Activated CD4-positive, alpha-beta memory T cell treated with anti-CD3 and anti-CD28 coated beads for 36 hours (primary cell): ENCODE measurements at regions of chr2 and their contacts with region 1.

Region 1: DNA sequence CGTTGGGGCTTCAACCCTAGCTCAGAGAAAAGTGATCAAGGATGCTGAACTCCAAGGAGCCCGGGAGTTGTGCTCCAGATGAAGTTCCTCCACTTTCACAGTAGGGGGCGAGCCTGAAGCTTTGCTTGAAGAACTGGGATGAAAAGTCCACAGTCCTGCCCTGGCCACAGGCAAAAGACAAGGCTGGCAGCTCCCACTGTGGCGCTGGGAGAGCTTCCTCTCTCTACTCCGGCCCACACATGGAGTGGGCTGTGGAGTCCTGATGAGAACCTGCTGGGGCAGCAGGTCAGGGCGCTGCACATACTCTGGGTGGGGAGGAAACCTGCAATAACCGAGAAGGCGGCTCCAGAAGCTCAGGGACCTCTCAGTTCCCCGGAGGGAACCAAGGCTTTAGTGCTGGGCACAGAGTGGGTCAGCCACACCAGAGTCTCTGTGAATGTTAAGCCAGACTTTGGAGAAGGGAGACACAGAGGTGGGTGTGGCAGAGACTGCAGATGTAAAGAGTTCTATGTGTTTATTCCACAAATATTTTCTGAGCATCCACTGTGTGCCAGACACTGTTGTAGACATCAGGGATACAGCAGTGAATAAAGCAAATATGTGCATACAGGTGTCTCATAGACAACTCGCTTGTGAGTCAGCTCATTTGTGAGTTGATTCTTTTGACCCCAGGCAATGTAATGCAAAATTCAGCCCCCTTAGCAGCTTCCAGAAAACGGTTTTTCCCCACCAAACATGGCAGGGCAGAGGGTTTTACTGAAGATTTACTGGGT is 48.0 kb upstream of the MRPL33 start:
- DNase-seq: peak; percentile 44
- H3K4me3 Mint-ChIP-seq: no peak overlapping the region
- H3K27ac Mint-ChIP-seq: no peak overlapping the region
- H3K4me1 Mint-ChIP-seq: peaks cover 29% of the 10 kb centered on the region
- H3K27me3 Mint-ChIP-seq: peaks cover 2% of the 10 kb centered on the region

Region 2: DNA sequence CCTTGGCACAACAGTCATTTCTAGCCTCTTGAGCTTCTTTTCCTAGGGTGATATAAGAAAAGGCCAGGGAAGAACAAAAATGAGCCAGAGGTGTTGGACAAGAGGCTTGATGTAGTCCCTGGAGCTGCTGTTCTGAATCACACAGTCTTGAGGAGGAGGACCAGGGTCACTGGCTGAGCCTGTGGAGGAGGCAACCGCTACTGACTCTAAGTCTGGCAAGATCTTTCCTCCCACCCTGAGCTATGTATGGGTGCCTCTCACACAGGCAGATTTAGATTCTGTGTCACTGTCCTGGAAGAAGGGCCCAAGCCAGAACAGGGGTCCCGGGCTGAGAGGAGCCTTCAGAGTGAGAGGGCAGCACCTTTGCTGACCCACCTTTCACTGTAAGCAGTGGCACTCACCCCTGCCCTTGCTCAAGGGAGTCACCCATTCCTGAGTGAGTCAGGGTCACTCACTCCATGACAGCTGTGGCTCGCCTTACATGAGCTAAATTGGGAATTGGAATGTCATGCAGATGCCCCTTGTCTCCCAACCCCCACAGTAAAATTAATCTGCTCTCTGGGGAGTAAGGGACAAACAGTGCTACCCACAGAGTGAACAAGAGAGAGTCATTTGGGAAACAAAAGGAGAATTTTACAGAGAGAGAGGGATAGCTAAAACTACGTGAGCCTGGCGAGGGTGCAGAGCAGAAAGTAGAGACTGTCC is 441.6 kb before region 1 on chr2 and contains the start of gene TRIM54:
- CTCF ChIA-PET with region 1: no interaction called
- POLR2A ChIA-PET with region 1: no interaction called
- intact Hi-C with region 1: no loop called
- DNase-seq: no peak
- H3K4me3 Mint-ChIP-seq: no peak within 1 kb of the TSS
- H3K27ac Mint-ChIP-seq: no peak within 1 kb of the TSS
- H3K4me1 Mint-ChIP-seq: peaks cover 2% of the 10 kb centered on the region
- H3K27me3 Mint-ChIP-seq: peaks cover 20% of the 10 kb centered on the region
- total RNA-seq, gene TRIM54: not detected

Region 3: DNA sequence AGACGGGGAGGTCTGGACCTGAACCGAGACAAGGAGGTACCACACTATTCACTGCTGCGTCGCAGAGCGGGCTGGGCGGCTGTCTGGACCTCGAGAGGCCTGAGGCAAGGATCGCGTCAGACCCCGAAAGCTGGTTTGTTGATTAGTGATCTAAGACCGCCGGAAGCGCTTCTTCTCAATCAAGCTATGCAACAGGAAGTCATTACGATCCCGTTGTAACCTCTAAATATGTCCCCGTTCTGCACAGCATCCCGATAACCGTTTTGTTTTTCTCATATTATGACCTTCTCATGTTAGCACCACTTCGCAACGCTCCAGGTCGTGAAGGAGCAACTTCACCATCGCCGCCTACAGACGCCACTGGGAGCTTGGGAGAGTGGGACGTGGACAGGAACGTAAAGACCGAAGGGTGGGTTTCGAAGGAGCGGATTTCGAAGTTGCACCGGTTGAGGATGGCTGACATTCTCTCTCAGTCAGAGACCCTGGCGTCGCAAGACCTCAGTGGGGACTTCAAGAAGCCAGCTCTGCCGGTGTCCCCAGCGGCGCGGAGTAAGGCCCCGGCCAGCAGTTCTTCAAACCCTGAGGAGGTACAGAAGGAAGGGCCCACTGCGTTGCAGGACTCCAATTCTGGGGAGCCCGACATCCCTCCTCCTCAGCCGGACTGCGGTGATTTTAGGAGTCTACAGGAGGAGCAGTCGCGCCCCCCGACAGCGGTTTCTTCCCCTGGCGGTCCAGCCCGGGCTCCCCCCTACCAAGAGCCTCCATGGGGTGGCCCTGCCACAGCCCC is 59.9 kb before region 1 on chr2 and contains the starts of genes SLC4A1AP and SUPT7L:
- CTCF ChIA-PET with region 1: no interaction called
- POLR2A ChIA-PET with region 1: no interaction called
- intact Hi-C with region 1: no loop called
- DNase-seq: peak; percentile 81
- H3K4me3 Mint-ChIP-seq: peak within 1 kb of the TSS; percentile 99
- H3K27ac Mint-ChIP-seq: peak within 1 kb of the TSS; percentile 100
- H3K4me1 Mint-ChIP-seq: peaks cover 50% of the 10 kb centered on the region
- H3K27me3 Mint-ChIP-seq: no peaks in the 10 kb centered on the region
- total RNA-seq, gene SLC4A1AP: 26.5 TPM
- total RNA-seq, gene SUPT7L: 30.1 to 30.3 TPM

Region 4: DNA sequence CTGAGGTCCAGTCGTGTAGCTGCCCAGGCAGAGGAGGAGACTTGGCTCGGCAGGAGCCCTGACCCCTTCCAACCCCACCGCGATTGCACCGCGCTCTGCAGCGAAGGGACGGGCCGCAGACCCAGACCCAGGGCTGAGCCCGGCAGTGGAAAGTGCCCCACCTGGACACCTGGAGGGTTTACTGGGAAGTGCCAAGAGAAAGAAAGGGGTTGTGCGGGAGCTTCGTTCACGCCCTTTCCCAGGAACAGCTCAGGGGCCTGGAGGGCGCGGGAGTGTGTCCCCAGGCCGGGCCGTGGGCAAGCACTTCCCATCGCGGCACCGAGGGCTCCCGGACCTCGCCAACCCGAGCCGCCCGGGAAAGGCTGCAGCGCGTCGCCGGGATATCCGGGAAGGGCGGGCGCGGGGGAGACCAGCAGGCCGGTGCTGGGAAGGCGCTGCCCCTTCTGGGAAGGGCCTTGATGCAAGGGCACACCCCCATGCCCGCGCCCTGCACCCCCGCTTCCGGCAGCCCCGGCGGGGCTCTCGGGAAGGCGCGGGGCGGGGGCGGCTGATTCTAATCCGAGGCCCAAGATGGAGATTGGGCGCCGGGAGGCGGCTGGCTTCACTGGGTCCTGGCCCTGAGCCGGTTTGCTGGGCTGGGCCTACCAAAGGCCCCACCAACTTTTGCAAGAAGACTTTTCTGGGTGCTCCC is 11.8 kb after region 1 on chr2:
- CTCF ChIA-PET with region 1: interaction called, 22 read pairs
- POLR2A ChIA-PET with region 1: no interaction called
- intact Hi-C with region 1: no loop called
- DNase-seq: peak; percentile 80
- H3K4me3 Mint-ChIP-seq: peak overlapping the region; percentile 29
- H3K27ac Mint-ChIP-seq: peak overlapping the region; percentile 47
- H3K4me1 Mint-ChIP-seq: peaks cover 18% of the 10 kb centered on the region
- H3K27me3 Mint-ChIP-seq: no peaks in the 10 kb centered on the region

Region 5: GRCh38 chr2:27747827-27748352 is 24.3 kb after region 1 on chr2:
- CTCF ChIA-PET with region 1: interaction called, 19 read pairs
- POLR2A ChIA-PET with region 1: no interaction called
- intact Hi-C with region 1: no loop called
- DNase-seq: no peak
- H3K4me3 Mint-ChIP-seq: no peak overlapping the region
- H3K27ac Mint-ChIP-seq: no peak overlapping the region
- H3K4me1 Mint-ChIP-seq: no peaks in the 10 kb centered on the region
- H3K27me3 Mint-ChIP-seq: peaks cover 7% of the 10 kb centered on the region

Region 6: GRCh38 chr2:27754138-27754588 is 30.6 kb after region 1 on chr2:
- CTCF ChIA-PET with region 1: interaction called, 19 read pairs
- POLR2A ChIA-PET with region 1: no interaction called
- intact Hi-C with region 1: no loop called
- DNase-seq: peak; percentile 91
- H3K4me3 Mint-ChIP-seq: no peak overlapping the region
- H3K27ac Mint-ChIP-seq: peak overlapping the region; percentile 30
- H3K4me1 Mint-ChIP-seq: peaks cover 14% of the 10 kb centered on the region
- H3K27me3 Mint-ChIP-seq: peaks cover 10% of the 10 kb centered on the region

Region 7: GRCh38 chr2:27832396-27832795 is 108.8 kb after region 1 on chr2:
- CTCF ChIA-PET with region 1: no interaction called
- POLR2A ChIA-PET with region 1: no interaction called
- intact Hi-C with region 1: no loop called
- DNase-seq: no peak
- H3K4me3 Mint-ChIP-seq: no peak overlapping the region
- H3K27ac Mint-ChIP-seq: no peak overlapping the region
- H3K4me1 Mint-ChIP-seq: no peaks in the 10 kb centered on the region
- H3K27me3 Mint-ChIP-seq: no peaks in the 10 kb centered on the region

Region 8: DNA sequence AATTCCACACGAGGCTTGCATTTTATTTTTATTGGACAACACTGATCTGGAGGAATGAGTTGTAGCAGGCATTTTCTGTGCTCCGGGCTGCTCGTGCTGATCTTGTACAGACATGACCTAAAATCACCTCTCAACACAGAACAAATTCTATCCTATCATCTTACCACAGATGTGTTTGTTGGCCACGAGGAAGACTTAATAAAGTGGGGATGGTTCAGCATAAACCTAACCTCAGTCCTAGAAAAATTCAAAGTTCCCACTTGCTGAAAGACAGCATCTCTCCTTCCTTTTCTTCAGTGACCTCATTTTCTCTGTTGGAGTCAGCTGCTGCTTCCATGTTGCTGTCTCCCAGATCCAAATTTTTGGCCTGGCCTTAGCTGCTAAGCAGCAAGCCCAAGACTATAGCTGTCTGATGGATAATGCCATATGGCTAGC is 121.3 kb after region 1 on chr2:
- CTCF ChIA-PET with region 1: no interaction called
- POLR2A ChIA-PET with region 1: no interaction called
- intact Hi-C with region 1: no loop called
- DNase-seq: no peak
- H3K4me3 Mint-ChIP-seq: no peak overlapping the region
- H3K27ac Mint-ChIP-seq: no peak overlapping the region
- H3K4me1 Mint-ChIP-seq: no peaks in the 10 kb centered on the region
- H3K27me3 Mint-ChIP-seq: no peaks in the 10 kb centered on the region